ENCODE measurements at regions of chr20 and their contacts with region 1.

Region 1: GRCh38 chr20:10864076-10864918 is 190.5 kb upstream of the JAG1 start:
- DNase-seq: peak; percentile 92
- ATAC-seq: peak; percentile 70
- H3K4me3 ChIP-seq: peak overlapping the region; percentile 54
- H3K27ac ChIP-seq: peak overlapping the region; percentile 91
- H3K4me1 ChIP-seq: peaks cover 51% of the 10 kb centered on the region
- H3K27me3 ChIP-seq: no peaks in the 10 kb centered on the region
- CTCF ChIP-seq: no peak

Region 2: DNA sequence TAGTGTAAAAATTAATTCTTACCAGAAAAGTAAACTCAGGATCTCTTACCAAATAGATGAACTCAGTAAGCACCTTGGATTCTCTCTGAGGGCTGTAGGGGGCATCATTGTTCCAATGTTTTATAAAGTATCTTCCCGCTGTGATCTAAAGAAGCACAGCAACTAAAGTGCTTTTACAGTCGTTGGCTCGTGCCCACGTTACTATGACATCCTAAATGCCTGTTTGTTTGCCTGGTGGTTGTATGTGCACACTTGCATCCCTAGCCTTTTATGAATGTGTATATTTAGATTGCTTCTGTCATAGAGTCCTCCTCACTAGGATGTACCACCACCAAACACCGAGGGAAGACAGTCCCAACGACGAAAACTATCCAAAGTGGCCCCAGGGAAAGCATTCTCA is 394.7 kb before region 1 on chr20:
- CTCF ChIA-PET with region 1: no interaction called
- POLR2A ChIA-PET with region 1: interaction called, 3 read pairs
- intact Hi-C with region 1: loop called (anchors 10 kb)
- DNase-seq: peak; percentile 87
- ATAC-seq: peak; percentile 79
- H3K4me3 ChIP-seq: no peak overlapping the region
- H3K27ac ChIP-seq: peak overlapping the region; percentile 23
- H3K4me1 ChIP-seq: peaks cover 18% of the 10 kb centered on the region
- H3K27me3 ChIP-seq: no peaks in the 10 kb centered on the region
- CTCF ChIP-seq: peak; percentile 80

Region 3: GRCh38 chr20:10715035-10715434 is 149.3 kb before region 1 on chr20:
- CTCF ChIA-PET with region 1: no interaction called
- POLR2A ChIA-PET with region 1: no interaction called
- intact Hi-C with region 1: loop called (anchors 5 kb)
- DNase-seq: peak; percentile 85
- ATAC-seq: peak; percentile 61
- H3K4me3 ChIP-seq: no peak overlapping the region
- H3K27ac ChIP-seq: peak overlapping the region; percentile 48
- H3K4me1 ChIP-seq: peaks cover 55% of the 10 kb centered on the region
- H3K27me3 ChIP-seq: no peaks in the 10 kb centered on the region
- CTCF ChIP-seq: no peak

Region 4: DNA sequence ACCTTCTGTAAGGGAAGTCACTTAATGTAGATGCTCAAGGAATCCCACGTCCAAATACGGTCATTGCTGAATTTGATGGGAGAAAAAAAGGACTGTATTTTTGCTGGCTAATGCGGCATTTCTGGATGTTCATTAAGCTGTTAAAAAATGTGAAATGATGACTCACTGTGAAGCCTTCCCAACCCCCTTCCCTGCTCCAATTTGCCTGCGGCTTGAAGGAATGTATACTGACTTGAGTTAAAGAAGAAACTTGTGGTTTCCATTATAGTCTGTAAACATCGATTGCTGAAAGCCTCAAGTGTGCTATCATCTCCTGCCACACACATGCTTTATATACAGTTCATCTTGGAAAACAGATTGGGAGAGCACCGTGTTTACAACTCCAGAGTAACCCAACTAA is 58.6 kb after region 1 on chr20:
- CTCF ChIA-PET with region 1: no interaction called
- POLR2A ChIA-PET with region 1: no interaction called
- intact Hi-C with region 1: loop called (anchors 1 kb)
- DNase-seq: peak; percentile 97
- ATAC-seq: peak; percentile 79
- H3K4me3 ChIP-seq: peak overlapping the region; percentile 23; the same call in 1 of the 2 replicates
- H3K27ac ChIP-seq: peak overlapping the region; percentile 69
- H3K4me1 ChIP-seq: peaks cover 64% of the 10 kb centered on the region
- H3K27me3 ChIP-seq: no peaks in the 10 kb centered on the region
- CTCF ChIP-seq: no peak

Region 5: DNA sequence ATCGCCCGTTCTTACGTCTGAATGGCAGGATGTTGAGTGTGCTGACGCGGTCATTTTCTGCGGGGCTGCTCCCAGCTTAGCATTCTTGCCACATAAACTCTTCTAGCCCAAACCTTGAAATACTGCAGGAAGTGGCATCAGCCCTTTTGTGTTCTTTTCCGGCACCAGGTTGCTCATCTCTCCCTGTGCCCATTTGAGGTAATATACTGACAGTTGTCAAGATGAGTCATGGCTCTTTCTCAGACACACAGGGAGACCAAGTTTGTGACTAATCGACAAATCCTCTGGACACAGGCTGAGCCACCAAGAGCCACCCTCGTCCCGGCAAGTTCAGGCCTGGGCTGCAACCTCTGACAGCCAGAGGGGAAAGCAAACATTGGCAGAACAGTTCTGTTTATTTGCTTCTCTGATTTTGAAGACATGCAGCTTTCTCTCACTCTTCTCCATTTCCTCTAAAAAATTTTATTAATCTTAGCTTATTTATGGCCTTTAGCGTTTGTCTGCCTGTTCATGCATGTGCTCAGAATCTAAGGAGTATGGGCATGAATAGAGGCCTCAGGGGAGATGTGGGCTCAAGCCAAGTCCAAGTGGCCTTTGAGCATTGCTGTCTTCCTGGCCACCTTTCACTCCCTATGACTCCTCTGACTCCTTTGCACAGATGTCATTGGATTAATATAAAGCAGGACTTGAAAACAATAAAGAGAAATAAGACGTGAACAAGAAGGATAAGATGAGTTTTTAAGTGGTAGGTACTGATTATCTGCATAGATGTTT is 137.7 kb after region 1 on chr20:
- CTCF ChIA-PET with region 1: no interaction called
- POLR2A ChIA-PET with region 1: interaction called, 6 read pairs
- intact Hi-C with region 1: loop called (anchors 5 kb)
- DNase-seq: peak; percentile 99
- ATAC-seq: peak; percentile 99
- H3K4me3 ChIP-seq: 0 out of 2 replicates have a peak overlapping the region, but pooled peaks have one; percentile 7
- H3K27ac ChIP-seq: peak overlapping the region; percentile 93
- H3K4me1 ChIP-seq: peaks cover 24% of the 10 kb centered on the region
- H3K27me3 ChIP-seq: no peaks in the 10 kb centered on the region
- CTCF ChIP-seq: no peak

Region 6: GRCh38 chr20:11204926-11205768 is 340.9 kb after region 1 on chr20:
- CTCF ChIA-PET with region 1: interaction called, 3 read pairs
- POLR2A ChIA-PET with region 1: no interaction called
- intact Hi-C with region 1: loop called (anchors 10 kb)
- DNase-seq: peak; percentile 84
- ATAC-seq: peak; percentile 42
- H3K4me3 ChIP-seq: no peak overlapping the region
- H3K27ac ChIP-seq: no peak overlapping the region
- H3K4me1 ChIP-seq: peaks cover 51% of the 10 kb centered on the region
- H3K27me3 ChIP-seq: no peaks in the 10 kb centered on the region
- CTCF ChIP-seq: peak; percentile 96

Measured in PC-3 (cell line).